ENCODE measurements at regions of chrX and their contacts with region 1.

Region 1: GRCh38 chrX:138908577-138908976 is 197.1 kb upstream of the FGF13 start:
- DNase-seq: no peak
- ATAC-seq: no peak
- H3K4me3 ChIP-seq: no peak overlapping the region
- H3K27ac ChIP-seq: no peak overlapping the region
- H3K4me1 ChIP-seq: no peaks in the 10 kb centered on the region
- H3K27me3 ChIP-seq: peaks cover 0 to 3% (median 0%) of the 10 kb centered on the region in 7 donors
- CTCF ChIP-seq: no peak

Region 2: DNA sequence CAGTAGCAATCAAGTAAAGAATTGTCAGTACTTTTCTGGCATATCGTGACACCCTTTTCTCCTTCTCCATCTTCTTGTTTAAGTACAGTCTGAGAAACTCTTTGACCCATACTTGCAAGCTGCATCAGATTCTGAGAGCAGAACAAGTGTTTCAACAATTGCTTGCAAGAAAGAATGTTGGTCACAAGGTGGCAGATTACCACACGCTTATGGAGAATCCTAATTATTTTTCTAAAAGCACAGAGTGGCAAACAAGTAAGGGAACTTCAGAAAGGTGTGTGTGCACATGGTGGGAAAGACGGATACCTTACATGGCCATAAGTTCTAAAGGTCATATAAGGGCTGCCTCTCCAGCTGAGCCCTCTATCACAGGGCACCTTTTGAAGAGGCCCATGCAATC is 60.6 kb before region 1 on chrX:
- intact Hi-C with region 1: loop called in 1 of 10 experiments (anchors 2 kb)
- DNase-seq: no peak
- ATAC-seq: no peak
- H3K4me3 ChIP-seq: no peak overlapping the region
- H3K27ac ChIP-seq: no peak overlapping the region
- H3K4me1 ChIP-seq: peaks cover 0 to 2% (median 0%) of the 10 kb centered on the region in 9 donors
- H3K27me3 ChIP-seq: peaks cover 0 to 28% (median 0%) of the 10 kb centered on the region in 7 donors
- CTCF ChIP-seq: peak in 4 of 9 donors; percentile 13 to 29 (median 17)

Region 3: DNA sequence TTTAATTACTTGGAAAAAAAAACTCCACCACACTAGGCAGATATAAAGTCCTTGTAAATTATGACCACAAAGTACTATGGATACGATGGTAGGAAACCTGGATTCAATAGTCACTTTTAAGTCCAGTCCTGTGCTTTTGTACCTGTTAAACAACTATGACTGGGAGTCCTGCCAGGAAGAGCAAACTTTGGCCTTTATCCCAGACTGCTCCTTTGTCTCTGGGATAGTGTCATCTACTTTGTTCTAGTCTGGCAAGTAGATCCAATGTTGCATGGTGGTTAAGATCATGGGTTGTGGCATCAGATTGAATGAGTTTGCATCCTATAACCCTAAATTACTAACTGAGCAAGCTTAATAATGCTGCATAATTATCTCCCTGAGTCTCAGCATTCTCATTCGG is 21.8 kb before region 1 on chrX:
- intact Hi-C with region 1: no loop called
- DNase-seq: no peak
- ATAC-seq: no peak
- H3K4me3 ChIP-seq: no peak overlapping the region
- H3K27ac ChIP-seq: no peak overlapping the region
- H3K4me1 ChIP-seq: no peaks in the 10 kb centered on the region
- H3K27me3 ChIP-seq: no peaks in the 10 kb centered on the region
- CTCF ChIP-seq: no peak